ENCODE measurements at regions of chr9 and their contacts with region 1.

Region 1: GRCh38 chr9:34675048-34675714 is 12.7 kb upstream of the CCL27 start:
- DNase-seq: peak; percentile 85 to 90 (median 85)
- H3K4me3 ChIP-seq: no peak overlapping the region
- H3K27ac ChIP-seq: no peak overlapping the region
- H3K4me1 ChIP-seq: no peaks in the 10 kb centered on the region
- H3K27me3 ChIP-seq: no peaks in the 10 kb centered on the region

Region 2: DNA sequence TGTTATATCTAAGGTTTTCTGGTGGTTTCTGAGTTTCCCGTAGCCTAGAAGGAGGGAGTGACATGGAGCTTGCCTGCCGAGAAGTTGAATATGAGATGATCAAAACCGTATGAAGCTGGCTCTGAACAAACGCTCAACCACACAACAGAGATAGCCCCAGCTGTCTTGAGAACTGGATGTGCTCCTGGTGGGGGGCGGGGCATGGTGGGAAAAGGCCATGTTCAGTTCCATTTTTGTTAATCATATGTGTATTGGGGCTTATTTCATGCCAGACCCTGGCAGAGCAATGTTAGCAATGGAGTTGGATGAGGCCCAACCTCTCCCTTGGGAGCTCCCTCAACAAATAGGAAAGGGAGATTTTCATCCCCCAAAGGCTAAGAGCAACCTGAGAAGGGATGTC is 11.1 kb after region 1 on chr9:
- CTCF ChIA-PET with region 1: interaction called, 43 read pairs
- POLR2A ChIA-PET with region 1: no interaction called
- DNase-seq: no peak
- H3K4me3 ChIP-seq: no peak overlapping the region
- H3K27ac ChIP-seq: no peak overlapping the region
- H3K4me1 ChIP-seq: peaks cover under 1 to 20% (median 10%) of the 10 kb centered on the region in 4 experiments
- H3K27me3 ChIP-seq: peaks cover 0 to 2% (median 0%) of the 10 kb centered on the region in 5 experiments

Region 3: DNA sequence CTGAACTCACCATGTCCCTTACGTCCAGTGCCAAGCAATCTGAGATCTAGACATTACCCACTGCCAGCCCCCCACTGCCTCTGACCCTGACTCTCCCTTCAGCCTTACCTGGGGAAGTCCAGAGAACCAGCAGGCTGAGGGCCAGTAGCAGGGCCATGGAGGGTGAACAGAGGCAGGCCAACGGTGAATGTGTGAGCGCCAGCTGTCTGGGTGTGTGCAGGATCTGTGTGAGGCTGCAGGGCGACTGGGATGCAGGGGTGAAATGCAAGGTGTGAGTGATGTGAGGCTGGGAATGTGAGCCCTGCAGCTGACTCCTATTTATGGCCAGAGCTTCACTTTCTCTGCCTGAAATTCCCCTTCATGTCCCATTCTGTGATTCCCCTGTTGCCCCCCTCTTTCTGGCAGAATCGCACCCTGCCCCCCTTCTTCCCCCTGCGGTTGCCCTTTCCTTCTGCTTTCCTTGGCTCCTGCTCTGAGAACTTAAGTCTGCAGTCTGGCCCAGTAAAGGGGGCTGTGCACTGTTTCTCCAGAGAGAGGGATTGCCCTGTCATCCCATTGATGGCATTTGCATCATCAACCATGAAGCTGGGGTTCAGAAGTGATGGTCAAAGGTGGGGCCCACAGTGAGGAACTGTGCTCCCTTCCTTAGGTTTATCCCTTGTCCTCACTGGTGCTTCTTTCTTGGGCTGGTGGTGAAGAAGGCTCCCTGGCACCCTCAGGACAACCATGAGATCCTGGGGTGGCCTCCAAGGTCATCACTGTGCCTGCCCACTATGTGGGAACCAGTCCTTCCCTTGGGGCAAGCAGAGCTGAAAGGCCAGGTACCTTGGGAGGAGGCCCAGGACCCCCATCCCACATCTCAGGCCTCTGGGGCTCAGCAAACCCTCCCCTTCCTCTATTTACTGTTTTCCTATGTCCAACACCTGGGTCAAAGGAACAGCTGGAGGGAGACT is 16.1 kb after region 1 on chr9 and contains the start of gene CCL19:
- CTCF ChIA-PET with region 1: interaction called, 220 read pairs
- POLR2A ChIA-PET with region 1: no interaction called
- DNase-seq: peak; percentile 59 to 88 (median 87)
- H3K4me3 ChIP-seq: peak within 1 kb of the TSS in 1 of 7 experiments; percentile 23
- H3K27ac ChIP-seq: no peak within 1 kb of the TSS
- H3K4me1 ChIP-seq: peaks cover 3 to 29% (median 16%) of the 10 kb centered on the region in 4 experiments
- H3K27me3 ChIP-seq: no peaks in the 10 kb centered on the region

Measured in common myeloid progenitor, CD34-positive (primary cell).